Dendritic cell treated with granulocyte-macrophage colony-stimulating factor and Interleukin-4, amounts not matched to agents 40 ng/mL and 50 ng/mL, for 4 days (primary cell): ENCODE measurements at regions of chrX and their contacts with region 1.

Region 1: DNA sequence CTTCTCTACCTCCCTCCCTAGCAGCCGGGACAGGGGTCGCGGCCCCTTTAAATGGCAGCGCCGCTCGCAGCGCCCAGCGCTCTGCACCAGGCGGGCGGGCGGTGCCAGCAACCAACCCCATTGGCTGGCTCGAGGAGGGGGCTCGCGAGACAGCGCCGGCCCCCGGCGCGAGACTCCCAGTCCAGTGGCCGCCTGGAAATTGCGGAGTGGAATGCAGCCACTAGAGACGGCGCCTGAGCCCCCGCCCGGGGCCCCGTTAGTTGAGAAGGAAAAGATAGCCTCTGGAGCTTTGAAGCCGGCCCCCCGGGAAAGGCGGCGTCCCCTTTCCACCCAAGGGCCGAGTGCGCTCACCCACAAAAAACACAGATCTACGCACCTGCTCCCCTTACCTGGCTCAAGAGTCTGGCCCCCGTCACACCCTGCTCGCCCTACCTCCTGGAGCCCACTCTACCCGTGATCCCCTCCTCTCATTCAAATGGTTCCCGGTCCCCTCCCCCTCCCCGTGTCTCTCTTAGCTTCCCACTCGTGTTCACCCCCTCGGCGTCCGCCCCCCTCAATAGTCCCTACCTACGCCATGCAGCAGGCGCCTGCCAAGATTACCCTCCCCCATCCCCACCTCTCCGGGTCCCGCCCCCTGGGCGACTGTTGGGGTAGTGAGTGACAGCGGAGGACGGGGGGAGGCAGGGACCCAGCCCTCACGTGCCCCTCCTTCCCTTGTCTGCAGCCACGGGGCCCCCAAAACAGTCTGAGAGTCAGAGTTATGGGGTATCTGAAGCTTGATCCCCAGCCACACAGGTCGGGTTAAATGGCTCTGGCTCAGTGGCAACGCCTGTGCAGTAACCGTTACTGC is at the start of gene ZMYM3:
- H3K4me3 Mint-ChIP-seq: peak within 1 kb of the TSS; percentile 87
- H3K27ac Mint-ChIP-seq: peak within 1 kb of the TSS; percentile 97
- H3K4me1 Mint-ChIP-seq: peaks cover 44% of the 10 kb centered on the region
- H3K27me3 Mint-ChIP-seq: no peaks in the 10 kb centered on the region

Region 2: DNA sequence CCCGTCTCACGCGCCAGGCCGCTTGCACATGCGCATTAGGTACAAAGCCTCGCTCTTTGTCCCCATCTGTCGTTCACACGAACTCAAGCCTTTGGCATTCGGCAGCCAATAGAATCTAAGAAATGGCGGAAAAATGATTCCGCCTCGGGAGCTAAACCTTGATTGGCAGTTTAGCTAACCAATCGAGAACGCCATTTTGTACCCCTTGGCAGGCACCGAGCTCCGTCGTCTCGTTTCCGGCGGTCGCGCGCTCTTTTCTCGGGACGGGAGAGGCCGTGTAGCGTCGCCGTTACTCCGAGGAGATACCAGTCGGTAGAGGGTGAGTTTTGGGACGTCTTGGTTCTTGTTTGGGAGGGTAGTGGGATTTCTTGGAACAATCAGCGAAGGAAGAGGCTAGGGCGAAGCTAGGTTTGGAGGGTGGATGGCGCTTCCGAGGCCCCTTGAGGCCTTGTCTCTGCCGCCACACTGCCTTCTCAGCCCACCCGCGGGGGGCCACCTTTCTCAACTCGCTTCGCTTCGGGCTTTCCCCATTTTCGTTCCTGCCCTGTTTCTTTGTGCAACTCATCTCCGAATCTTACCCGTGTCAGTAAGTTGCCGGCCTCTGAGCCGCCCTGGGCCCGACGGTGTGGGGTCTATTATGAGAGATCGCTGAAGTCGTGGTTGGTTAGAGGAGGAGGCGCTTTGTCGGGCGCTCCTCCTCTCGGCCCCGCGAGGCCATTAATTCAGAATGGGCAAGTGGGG is 29.3 kb after region 1 on chrX and contains the start of gene NONO:
- intact Hi-C with region 1: loop called (anchors 1 kb)
- H3K4me3 Mint-ChIP-seq: peak within 1 kb of the TSS; percentile 91
- H3K27ac Mint-ChIP-seq: peak within 1 kb of the TSS; percentile 100
- H3K4me1 Mint-ChIP-seq: no peaks in the 10 kb centered on the region
- H3K27me3 Mint-ChIP-seq: no peaks in the 10 kb centered on the region